ENCODE measurements at regions of chr16 and their contacts with region 1.

Region 1: GRCh38 chr16:88686439-88687253 is at the start of gene SNAI3:
- DNase-seq: peak; percentile 64 to 94
- H3K4me3 ChIP-seq: peak within 1 kb of the TSS; percentile 88
- H3K27ac ChIP-seq: no peak within 1 kb of the TSS
- H3K4me1 ChIP-seq: peaks cover 20% of the 10 kb centered on the region
- H3K27me3 ChIP-seq: no peaks in the 10 kb centered on the region
- CTCF ChIP-seq: no peak
- total RNA-seq, gene SNAI3: 1.3 and 2.0 TPM in 2 replicates

Region 2: DNA sequence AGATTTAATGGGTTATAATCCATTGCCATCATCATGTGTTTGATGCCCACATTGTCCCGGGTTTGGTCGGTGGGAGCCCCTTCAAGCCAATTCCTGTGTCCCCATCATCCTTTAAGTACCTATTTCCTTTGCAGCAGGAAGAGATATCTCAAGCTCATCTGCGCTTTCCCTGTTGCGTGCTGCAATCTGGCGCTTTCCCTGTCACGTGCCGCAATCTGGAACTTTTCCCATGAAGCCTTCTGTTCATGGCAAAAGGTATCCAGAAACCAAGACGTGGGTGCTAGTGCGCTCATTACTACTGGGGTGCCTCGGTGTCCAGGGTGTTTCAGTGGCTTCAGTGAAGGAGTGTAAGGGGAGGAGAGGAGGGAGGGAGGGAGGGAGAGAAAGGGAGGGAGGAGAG is 478.5 kb before region 1 on chr16:
- CTCF ChIA-PET with region 1: no interaction called
- POLR2A ChIA-PET with region 1: no interaction called
- intact Hi-C with region 1: no loop called
- DNase-seq: no peak
- H3K4me3 ChIP-seq: no peak overlapping the region
- H3K27ac ChIP-seq: no peak overlapping the region
- H3K4me1 ChIP-seq: no peaks in the 10 kb centered on the region
- H3K27me3 ChIP-seq: no peaks in the 10 kb centered on the region
- CTCF ChIP-seq: no peak

Region 3: GRCh38 chr16:88452482-88453216 is 234.0 kb before region 1 on chr16:
- CTCF ChIA-PET with region 1: interaction called, 5 read pairs
- POLR2A ChIA-PET with region 1: no interaction called
- intact Hi-C with region 1: loop called (anchors 10 kb)
- DNase-seq: peak; percentile 79 to 99
- H3K4me3 ChIP-seq: peak overlapping the region; percentile 81
- H3K27ac ChIP-seq: no peak overlapping the region
- H3K4me1 ChIP-seq: peaks cover 27% of the 10 kb centered on the region
- H3K27me3 ChIP-seq: peaks cover 17% of the 10 kb centered on the region
- CTCF ChIP-seq: no peak

Region 4: GRCh38 chr16:88632587-88632930 is 54.1 kb before region 1 on chr16:
- CTCF ChIA-PET with region 1: no interaction called
- POLR2A ChIA-PET with region 1: interaction called, 24 read pairs
- intact Hi-C with region 1: no loop called
- DNase-seq: no peak
- H3K4me3 ChIP-seq: no peak overlapping the region
- H3K27ac ChIP-seq: no peak overlapping the region
- H3K4me1 ChIP-seq: no peaks in the 10 kb centered on the region
- H3K27me3 ChIP-seq: no peaks in the 10 kb centered on the region
- CTCF ChIP-seq: no peak

Region 5: GRCh38 chr16:88672776-88673175 is 13.9 kb before region 1 on chr16:
- CTCF ChIA-PET with region 1: no interaction called
- POLR2A ChIA-PET with region 1: no interaction called
- intact Hi-C with region 1: no loop called
- DNase-seq: no peak
- H3K4me3 ChIP-seq: no peak overlapping the region
- H3K27ac ChIP-seq: no peak overlapping the region
- H3K4me1 ChIP-seq: no peaks in the 10 kb centered on the region
- H3K27me3 ChIP-seq: no peaks in the 10 kb centered on the region
- CTCF ChIP-seq: peak; percentile 43; the same call in 1 of the 2 replicates

Region 6: DNA sequence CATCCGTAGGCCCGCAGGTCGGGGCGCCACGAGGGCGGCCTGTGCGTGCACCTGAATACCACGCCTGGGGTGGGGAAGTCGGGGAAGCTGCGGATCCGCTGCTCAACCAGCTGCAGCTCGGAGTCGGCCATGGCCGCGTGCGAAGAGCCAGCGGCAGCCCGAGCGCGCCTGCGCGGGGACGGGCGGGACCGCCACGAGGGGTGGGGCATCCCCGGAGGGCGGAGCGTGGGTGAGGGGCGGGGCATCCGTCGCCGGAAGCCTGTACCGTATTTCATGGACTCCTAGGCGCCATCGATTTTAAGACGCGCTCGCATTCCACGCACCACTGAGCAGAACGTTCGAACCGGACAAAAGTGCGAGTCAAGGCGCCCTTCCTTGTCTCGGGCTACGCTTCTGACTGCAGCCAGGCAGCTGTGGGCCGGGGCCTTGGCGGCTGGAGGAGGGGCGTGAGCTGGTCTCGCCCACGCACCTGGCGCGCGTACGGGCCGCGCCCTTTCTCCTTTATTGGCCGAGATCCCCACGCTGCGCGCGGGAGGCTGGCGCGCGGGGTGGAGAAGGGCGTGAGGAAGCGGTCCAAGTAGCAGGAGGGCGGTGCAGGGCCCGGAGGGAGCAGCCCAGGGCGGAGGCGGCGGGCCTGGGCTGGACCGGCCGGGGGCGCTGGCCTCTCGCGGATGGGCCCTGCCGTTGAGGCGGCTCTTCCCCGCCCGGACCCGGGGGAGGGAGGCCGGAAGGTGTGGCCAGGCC is 125.3 kb after region 1 on chr16 and contains the start of gene APRT:
- CTCF ChIA-PET with region 1: no interaction called
- POLR2A ChIA-PET with region 1: no interaction called
- intact Hi-C with region 1: loop called (anchors 5 kb)
- DNase-seq: peak; percentile 85 to 99
- H3K4me3 ChIP-seq: peak within 1 kb of the TSS; percentile 91
- H3K27ac ChIP-seq: peak within 1 kb of the TSS; percentile 78
- H3K4me1 ChIP-seq: peaks cover 16% of the 10 kb centered on the region; the same call in 1 of the 2 replicates
- H3K27me3 ChIP-seq: no peaks in the 10 kb centered on the region
- CTCF ChIP-seq: peak; percentile 45; the same call in 1 of the 2 replicates
- total RNA-seq, gene APRT: 213 and 226 TPM in 2 replicates

Region 7: DNA sequence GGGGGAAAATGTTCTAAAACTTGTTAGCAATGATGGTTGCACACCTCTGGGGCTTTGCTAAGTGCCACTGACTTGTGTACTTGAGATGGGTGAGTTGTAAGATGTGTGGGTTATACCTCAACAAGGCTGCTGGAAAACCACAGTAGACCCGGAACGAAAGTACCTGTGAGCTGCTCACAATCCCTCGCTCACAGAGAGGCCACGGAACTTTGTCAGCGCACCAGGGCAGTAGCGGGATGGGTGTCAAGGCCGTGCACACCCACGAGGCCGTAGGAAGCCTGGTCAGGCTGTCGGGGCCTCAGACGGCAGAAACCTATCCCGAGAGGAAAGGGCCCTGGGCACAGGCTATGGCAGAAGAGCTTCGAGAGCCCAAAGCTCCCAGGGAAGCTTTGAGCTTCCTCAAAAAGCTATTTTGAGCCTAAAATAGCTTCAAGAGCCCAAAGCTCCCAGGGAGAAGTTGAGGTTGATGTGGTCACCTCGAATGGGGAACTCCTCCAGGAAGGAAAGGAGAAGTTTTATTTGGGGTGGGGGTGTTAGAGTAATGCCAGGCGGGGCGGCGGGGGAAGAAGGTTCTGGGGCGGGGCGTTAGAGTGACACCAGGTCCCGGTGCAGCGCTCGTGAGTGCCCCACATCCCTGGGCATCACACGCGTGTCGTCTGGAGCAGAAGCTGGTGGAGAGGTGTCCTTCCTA is 271.4 kb after region 1 on chr16:
- CTCF ChIA-PET with region 1: interaction called, 11 read pairs
- POLR2A ChIA-PET with region 1: no interaction called
- intact Hi-C with region 1: no loop called
- DNase-seq: no peak
- H3K4me3 ChIP-seq: no peak overlapping the region
- H3K27ac ChIP-seq: no peak overlapping the region
- H3K4me1 ChIP-seq: no peaks in the 10 kb centered on the region
- H3K27me3 ChIP-seq: peaks cover 63% of the 10 kb centered on the region
- CTCF ChIP-seq: no peak

Region 8: DNA sequence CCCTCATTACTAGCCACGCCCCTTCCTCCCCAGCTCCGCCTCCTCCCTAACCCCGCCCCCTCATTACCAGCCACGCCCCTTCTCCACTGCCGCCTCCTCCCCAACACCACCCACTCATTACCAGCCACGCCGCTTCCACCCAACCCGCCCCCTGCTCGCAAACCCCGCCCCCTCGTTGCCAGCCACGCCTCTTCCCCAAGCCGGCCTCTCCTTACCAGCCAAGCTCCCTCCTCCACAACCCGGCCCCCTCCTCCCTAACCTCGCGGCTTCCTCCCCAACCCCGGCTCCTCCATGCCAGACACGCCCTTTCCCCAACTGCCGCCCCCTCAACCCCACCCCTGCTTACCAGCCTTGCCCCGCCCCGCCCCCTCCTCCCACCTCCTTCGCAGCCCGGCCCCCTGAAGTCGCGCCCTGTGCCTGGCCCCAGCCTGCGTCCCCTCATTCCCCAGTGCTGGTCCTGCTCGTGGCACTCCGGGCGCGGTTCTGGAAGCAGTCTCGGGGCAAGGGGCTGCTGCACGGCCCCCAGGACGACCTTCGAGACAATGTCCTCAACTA is 506.5 kb after region 1 on chr16:
- CTCF ChIA-PET with region 1: no interaction called
- POLR2A ChIA-PET with region 1: interaction called, 16 read pairs
- intact Hi-C with region 1: no loop called
- DNase-seq: peak in 1 of 2 experiments; percentile 43
- H3K4me3 ChIP-seq: no peak overlapping the region
- H3K27ac ChIP-seq: no peak overlapping the region
- H3K4me1 ChIP-seq: no peaks in the 10 kb centered on the region
- H3K27me3 ChIP-seq: no peaks in the 10 kb centered on the region
- CTCF ChIP-seq: no peak